ENCODE measurements at regions of chr5 and their contacts with region 1.

Region 1: GRCh38 chr5:6377905-6378765 is at the start of gene MED10:
- DNase-seq: peak; percentile 83 to 86 (median 86)
- H3K4me3 ChIP-seq: peak within 1 kb of the TSS; percentile 79 to 98 (median 93)
- H3K4me3 Mint-ChIP-seq: peak within 1 kb of the TSS; percentile 99 to 100
- H3K27ac ChIP-seq: peak within 1 kb of the TSS; percentile 66 to 86
- H3K27ac Mint-ChIP-seq: peak within 1 kb of the TSS; percentile 89 to 97 (median 95)
- H3K4me1 ChIP-seq: peaks cover 15 to 21% of the 10 kb centered on the region in 2 donors
- H3K4me1 Mint-ChIP-seq: peaks cover 24% of the 10 kb centered on the region
- H3K27me3 ChIP-seq: peaks cover 4 to 7% of the 10 kb centered on the region in 2 donors
- H3K27me3 Mint-ChIP-seq: peaks cover 6 to 13% (median 12%) of the 10 kb centered on the region in 3 donors
- CTCF ChIP-seq: no peak
- polyA plus RNA-seq, gene MED10: 27.6 to 47.8 (median 47.3) TPM

Region 2: DNA sequence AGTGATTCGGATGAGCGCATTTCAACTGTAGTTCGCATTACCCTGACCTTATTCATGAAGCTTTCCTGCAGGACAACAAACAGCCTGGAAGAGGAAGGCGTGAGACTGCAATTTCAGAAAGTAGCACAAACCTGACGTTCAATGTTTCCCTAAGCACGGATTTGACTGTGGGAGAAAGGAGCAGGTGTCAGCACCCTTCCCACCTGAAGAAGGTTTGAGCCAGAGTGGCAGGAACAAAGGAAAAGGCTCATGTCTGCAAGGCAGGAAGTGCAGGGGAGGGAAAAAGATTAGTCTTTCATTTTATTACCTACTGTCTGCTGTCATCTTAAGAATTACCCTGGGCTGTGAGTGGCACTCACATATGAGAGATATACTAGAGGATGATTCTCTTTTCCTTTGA is 113.7 kb before region 1 on chr5:
- intact Hi-C with region 1: no loop called
- DNase-seq: no peak
- H3K4me3 ChIP-seq: no peak overlapping the region
- H3K4me3 Mint-ChIP-seq: no peak overlapping the region
- H3K27ac ChIP-seq: no peak overlapping the region
- H3K27ac Mint-ChIP-seq: no peak overlapping the region
- H3K4me1 ChIP-seq: no peaks in the 10 kb centered on the region
- H3K4me1 Mint-ChIP-seq: no peaks in the 10 kb centered on the region
- H3K27me3 ChIP-seq: no peaks in the 10 kb centered on the region
- H3K27me3 Mint-ChIP-seq: no peaks in the 10 kb centered on the region
- CTCF ChIP-seq: no peak

Region 3: GRCh38 chr5:6408627-6409446 is 30.7 kb after region 1 on chr5:
- intact Hi-C with region 1: no loop called
- DNase-seq: no peak
- H3K4me3 ChIP-seq: no peak overlapping the region
- H3K4me3 Mint-ChIP-seq: no peak overlapping the region
- H3K27ac ChIP-seq: no peak overlapping the region
- H3K27ac Mint-ChIP-seq: no peak overlapping the region
- H3K4me1 ChIP-seq: no peaks in the 10 kb centered on the region
- H3K4me1 Mint-ChIP-seq: no peaks in the 10 kb centered on the region
- H3K27me3 ChIP-seq: no peaks in the 10 kb centered on the region
- H3K27me3 Mint-ChIP-seq: peaks cover 0 to 11% (median 0%) of the 10 kb centered on the region in 3 donors
- CTCF ChIP-seq: no peak

Region 4: DNA sequence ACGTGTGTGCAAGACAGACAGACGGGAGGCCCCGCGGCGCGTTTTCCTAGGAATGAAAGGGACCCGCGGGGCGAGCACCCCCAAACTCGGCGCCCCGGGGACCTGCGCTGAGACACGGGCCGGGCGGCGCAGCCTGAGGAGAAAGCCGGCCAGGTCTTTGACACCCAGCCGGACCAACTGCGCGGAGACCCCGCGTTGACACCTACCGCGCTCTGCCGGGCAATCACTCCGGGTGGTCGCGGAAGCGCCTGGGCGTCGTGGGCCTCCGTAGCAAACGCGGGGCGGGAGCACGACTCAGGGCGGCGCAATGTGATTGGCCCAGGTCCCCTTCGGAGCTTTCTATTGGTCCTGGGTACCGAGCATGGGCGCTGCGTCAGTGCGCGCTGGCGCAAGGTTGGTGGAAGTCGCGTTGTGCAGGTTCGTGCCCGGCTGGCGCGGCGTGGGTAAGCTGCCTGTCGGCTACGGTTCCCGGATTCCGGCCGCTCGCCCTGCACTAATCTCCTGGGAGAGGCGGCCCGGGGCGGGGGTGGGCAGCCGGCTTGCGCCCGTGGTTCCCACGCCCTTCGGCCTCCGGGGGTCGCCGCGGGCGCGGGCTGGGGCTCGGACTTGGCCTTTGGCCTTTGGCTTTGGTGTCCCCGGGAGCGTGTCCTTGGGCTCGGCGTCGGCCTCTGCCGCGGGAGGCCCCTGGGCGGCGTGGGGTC is 1490.8 kb after region 1 on chr5 and contains the starts of genes FASTKD3 and MTRR:
- intact Hi-C with region 1: loop called in 1 of 2 experiments (anchors 10 kb)
- DNase-seq: peak; percentile 85 to 89 (median 88)
- H3K4me3 ChIP-seq: peak within 1 kb of the TSS; percentile 66 to 88 (median 83)
- H3K4me3 Mint-ChIP-seq: peak within 1 kb of the TSS; percentile 87 to 96
- H3K27ac ChIP-seq: peak within 1 kb of the TSS; percentile 41 to 85
- H3K27ac Mint-ChIP-seq: peak within 1 kb of the TSS; percentile 82 to 93 (median 90)
- H3K4me1 ChIP-seq: peaks cover 17 to 27% of the 10 kb centered on the region in 2 donors
- H3K4me1 Mint-ChIP-seq: peaks cover 44% of the 10 kb centered on the region
- H3K27me3 ChIP-seq: no peaks in the 10 kb centered on the region
- H3K27me3 Mint-ChIP-seq: no peaks in the 10 kb centered on the region
- CTCF ChIP-seq: no peak
- polyA plus RNA-seq, gene FASTKD3: 7.2 to 15.5 (median 10.7) TPM
- polyA plus RNA-seq, gene MTRR: 18.0 to 25.5 (median 22.1) TPM